CD8-positive, alpha-beta T cell (primary cell): ENCODE measurements at regions of chr17 and their contacts with region 1.

Region 1: GRCh38 chr17:68457539-68458259 is 403 bp upstream of the WIPI1 start:
- DNase-seq: peak; percentile 96 to 99 (median 98)
- ATAC-seq: peak; percentile 96
- H3K4me3 ChIP-seq: peak overlapping the region; percentile 55 to 66
- H3K4me3 Mint-ChIP-seq: peak overlapping the region; percentile 83
- H3K27ac ChIP-seq: peak overlapping the region; percentile 58 to 78
- H3K27ac Mint-ChIP-seq: peak overlapping the region; percentile 92
- H3K4me1 ChIP-seq: peaks cover 45% of the 10 kb centered on the region
- H3K4me1 Mint-ChIP-seq: peaks cover 58% of the 10 kb centered on the region
- H3K27me3 ChIP-seq: no peaks in the 10 kb centered on the region
- H3K27me3 Mint-ChIP-seq: no peaks in the 10 kb centered on the region
- CTCF ChIP-seq: no peak

Region 2: GRCh38 chr17:67824735-67825626 is 632.7 kb before region 1 on chr17 and contains the start of gene BPTF:
- CTCF ChIA-PET with region 1: no interaction called
- POLR2A ChIA-PET with region 1: no interaction called
- intact Hi-C with region 1: loop called in 1 of 2 experiments (anchors 5 kb)
- DNase-seq: peak; percentile 82 to 97 (median 92)
- ATAC-seq: peak; percentile 69
- H3K4me3 ChIP-seq: peak within 1 kb of the TSS; percentile 75 to 85
- H3K4me3 Mint-ChIP-seq: peak within 1 kb of the TSS; percentile 99
- H3K27ac ChIP-seq: peak within 1 kb of the TSS; percentile 68 to 80
- H3K27ac Mint-ChIP-seq: peak within 1 kb of the TSS; percentile 100
- H3K4me1 ChIP-seq: peaks cover 33% of the 10 kb centered on the region
- H3K4me1 Mint-ChIP-seq: peaks cover 31% of the 10 kb centered on the region
- H3K27me3 ChIP-seq: no peaks in the 10 kb centered on the region
- H3K27me3 Mint-ChIP-seq: peaks cover 4% of the 10 kb centered on the region
- CTCF ChIP-seq: peak; percentile 94
- total RNA-seq, gene BPTF: 97.8 to 107 TPM

Region 3: GRCh38 chr17:68101075-68101992 is 356.4 kb before region 1 on chr17:
- CTCF ChIA-PET with region 1: no interaction called
- POLR2A ChIA-PET with region 1: no interaction called
- intact Hi-C with region 1: loop called in 1 of 2 experiments (anchors 5 kb)
- DNase-seq: peak; percentile 38 to 83 (median 67)
- ATAC-seq: peak; percentile 70
- H3K4me3 ChIP-seq: peak overlapping the region; percentile 75 to 83
- H3K4me3 Mint-ChIP-seq: peak overlapping the region; percentile 96
- H3K27ac ChIP-seq: peak overlapping the region; percentile 73 to 88
- H3K27ac Mint-ChIP-seq: peak overlapping the region; percentile 97
- H3K4me1 ChIP-seq: peaks cover 12% of the 10 kb centered on the region
- H3K4me1 Mint-ChIP-seq: peaks cover 42% of the 10 kb centered on the region
- H3K27me3 ChIP-seq: no peaks in the 10 kb centered on the region
- H3K27me3 Mint-ChIP-seq: no peaks in the 10 kb centered on the region
- CTCF ChIP-seq: no peak

Region 4: GRCh38 chr17:68152161-68152571 is 305.5 kb before region 1 on chr17:
- CTCF ChIA-PET with region 1: no interaction called
- POLR2A ChIA-PET with region 1: no interaction called
- intact Hi-C with region 1: no loop called
- DNase-seq: no peak
- ATAC-seq: no peak
- H3K4me3 ChIP-seq: no peak overlapping the region
- H3K4me3 Mint-ChIP-seq: no peak overlapping the region
- H3K27ac ChIP-seq: no peak overlapping the region
- H3K27ac Mint-ChIP-seq: no peak overlapping the region
- H3K4me1 ChIP-seq: no peaks in the 10 kb centered on the region
- H3K4me1 Mint-ChIP-seq: no peaks in the 10 kb centered on the region
- H3K27me3 ChIP-seq: no peaks in the 10 kb centered on the region
- H3K27me3 Mint-ChIP-seq: no peaks in the 10 kb centered on the region
- CTCF ChIP-seq: no peak

Region 5: DNA sequence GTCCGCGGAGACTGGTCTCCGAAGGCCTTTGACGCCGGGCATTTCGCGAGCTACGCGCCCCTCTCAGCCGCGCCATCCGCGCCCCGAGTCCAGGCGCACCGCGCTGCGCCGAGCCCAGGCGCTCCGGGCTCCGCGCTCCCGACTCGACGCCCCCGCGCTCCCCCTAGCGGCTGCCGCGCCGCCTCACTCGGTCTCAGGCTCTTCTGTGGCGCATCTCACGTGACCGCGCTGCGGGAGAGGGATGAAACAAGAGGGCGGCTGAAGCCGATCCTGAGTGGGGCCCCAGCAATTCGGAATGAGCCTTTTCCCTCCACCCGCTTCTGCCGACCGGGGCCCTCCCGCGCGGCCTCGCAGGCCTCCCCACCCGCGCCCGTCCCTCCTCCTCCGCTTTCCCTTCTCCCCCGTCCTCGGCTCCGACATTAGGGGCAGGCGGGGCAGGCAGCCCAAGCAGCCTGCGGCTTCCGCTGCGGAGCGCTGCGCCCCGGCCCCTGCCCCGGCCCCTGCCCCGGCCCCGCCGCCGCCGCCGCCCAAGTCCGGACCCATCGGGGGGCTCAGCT is 252.4 kb before region 1 on chr17:
- CTCF ChIA-PET with region 1: interaction called, 7 read pairs
- POLR2A ChIA-PET with region 1: interaction called, 14 read pairs
- intact Hi-C with region 1: loop called (anchors 1 kb)
- DNase-seq: peak; percentile 87 to 96 (median 93)
- ATAC-seq: peak; percentile 70
- H3K4me3 ChIP-seq: peak overlapping the region; percentile 68 to 78
- H3K4me3 Mint-ChIP-seq: peak overlapping the region; percentile 88
- H3K27ac ChIP-seq: peak overlapping the region; percentile 77 to 78
- H3K27ac Mint-ChIP-seq: peak overlapping the region; percentile 93
- H3K4me1 ChIP-seq: peaks cover 23% of the 10 kb centered on the region
- H3K4me1 Mint-ChIP-seq: peaks cover 37% of the 10 kb centered on the region
- H3K27me3 ChIP-seq: no peaks in the 10 kb centered on the region
- H3K27me3 Mint-ChIP-seq: no peaks in the 10 kb centered on the region
- CTCF ChIP-seq: peak; percentile 89

Region 6: GRCh38 chr17:68255731-68256538 is 201.8 kb before region 1 on chr17:
- CTCF ChIA-PET with region 1: interaction called, 25 read pairs
- POLR2A ChIA-PET with region 1: interaction called, 3 read pairs
- intact Hi-C with region 1: no loop called
- DNase-seq: peak in 3 of 9 experiments; percentile 33 to 74 (median 58)
- ATAC-seq: peak; percentile 22
- H3K4me3 ChIP-seq: no peak overlapping the region
- H3K4me3 Mint-ChIP-seq: peak overlapping the region; percentile 24
- H3K27ac ChIP-seq: peak overlapping the region; percentile 34 to 97
- H3K27ac Mint-ChIP-seq: peak overlapping the region; percentile 97
- H3K4me1 ChIP-seq: peaks cover 76% of the 10 kb centered on the region
- H3K4me1 Mint-ChIP-seq: peaks cover 82% of the 10 kb centered on the region
- H3K27me3 ChIP-seq: no peaks in the 10 kb centered on the region
- H3K27me3 Mint-ChIP-seq: no peaks in the 10 kb centered on the region
- CTCF ChIP-seq: no peak

Region 7: GRCh38 chr17:68435876-68436842 is 21.5 kb before region 1 on chr17:
- CTCF ChIA-PET with region 1: interaction called, 215 read pairs
- POLR2A ChIA-PET with region 1: interaction called, 12 read pairs
- intact Hi-C with region 1: loop called (anchors 1 to 2 kb)
- DNase-seq: peak; percentile 71 to 91 (median 87)
- ATAC-seq: peak; percentile 83
- H3K4me3 ChIP-seq: no peak overlapping the region
- H3K4me3 Mint-ChIP-seq: peak overlapping the region; percentile 51
- H3K27ac ChIP-seq: no peak overlapping the region
- H3K27ac Mint-ChIP-seq: peak overlapping the region; percentile 81
- H3K4me1 ChIP-seq: peaks cover 30% of the 10 kb centered on the region
- H3K4me1 Mint-ChIP-seq: peaks cover 50% of the 10 kb centered on the region
- H3K27me3 ChIP-seq: no peaks in the 10 kb centered on the region
- H3K27me3 Mint-ChIP-seq: no peaks in the 10 kb centered on the region
- CTCF ChIP-seq: peak; percentile 96

Region 8: DNA sequence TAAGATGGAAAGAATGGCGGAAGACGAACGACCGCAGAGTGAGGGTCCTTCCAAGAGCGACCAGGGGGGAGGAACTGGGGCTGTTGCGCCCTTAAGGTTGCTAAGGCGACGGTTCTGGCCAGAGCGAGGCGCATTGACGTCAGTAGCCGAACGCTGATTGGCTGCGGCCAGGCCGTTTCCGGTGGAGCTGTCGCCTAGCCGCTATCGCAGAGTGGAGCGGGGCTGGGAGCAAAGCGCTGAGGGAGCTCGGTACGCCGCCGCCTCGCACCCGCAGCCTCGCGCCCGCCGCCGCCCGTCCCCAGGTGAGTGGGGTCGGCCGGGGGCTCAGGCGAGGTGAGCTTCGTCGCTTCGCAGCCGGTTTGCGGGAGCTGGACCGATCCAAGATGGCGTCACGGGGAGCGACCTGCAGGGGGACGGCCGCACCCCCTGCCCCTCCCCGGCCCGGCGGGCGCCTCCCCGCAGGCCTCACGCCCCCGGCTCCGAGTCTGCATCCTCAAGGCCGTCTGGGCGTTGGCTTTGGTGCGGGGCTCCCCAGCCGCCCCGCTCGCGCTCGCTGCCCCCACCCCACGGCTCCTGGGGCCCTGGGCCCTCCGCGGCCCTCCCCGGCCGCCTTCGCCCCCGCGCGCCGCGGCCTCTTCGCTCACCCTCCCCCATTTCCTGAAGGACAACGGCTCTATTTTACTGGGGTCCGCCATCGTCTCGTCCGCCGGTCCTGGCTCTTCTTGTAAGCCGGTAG is 54.7 kb after region 1 on chr17 and contains the start of gene PRKAR1A:
- CTCF ChIA-PET with region 1: no interaction called
- POLR2A ChIA-PET with region 1: interaction called, 3 read pairs
- intact Hi-C with region 1: loop called (anchors 1 to 2 kb)
- DNase-seq: peak; percentile 88 to 98 (median 94)
- ATAC-seq: peak; percentile 79
- H3K4me3 ChIP-seq: peak within 1 kb of the TSS; percentile 85 to 87
- H3K4me3 Mint-ChIP-seq: peak within 1 kb of the TSS; percentile 100
- H3K27ac ChIP-seq: peak within 1 kb of the TSS; percentile 99
- H3K27ac Mint-ChIP-seq: peak within 1 kb of the TSS; percentile 100
- H3K4me1 ChIP-seq: peaks cover 22% of the 10 kb centered on the region
- H3K4me1 Mint-ChIP-seq: peaks cover 54% of the 10 kb centered on the region
- H3K27me3 ChIP-seq: no peaks in the 10 kb centered on the region
- H3K27me3 Mint-ChIP-seq: no peaks in the 10 kb centered on the region
- CTCF ChIP-seq: no peak
- total RNA-seq, gene PRKAR1A: 61.2 to 63.5 TPM